Caco-2 (cell line): ENCODE measurements at regions of chr19 and their contacts with region 1.

Region 1: GRCh38 chr19:3984908-3985642 is at the start of gene EEF2:
- DNase-seq: peak; percentile 83 to 91
- H3K4me3 ChIP-seq: peak within 1 kb of the TSS; percentile 98
- H3K4me3 Mint-ChIP-seq: peak within 1 kb of the TSS; percentile 89
- H3K27ac Mint-ChIP-seq: peak within 1 kb of the TSS; percentile 96
- H3K4me1 ChIP-seq: peaks cover 12% of the 10 kb centered on the region
- H3K4me1 Mint-ChIP-seq: peaks cover 6% of the 10 kb centered on the region
- H3K27me3 ChIP-seq: no peaks in the 10 kb centered on the region
- H3K27me3 Mint-ChIP-seq: no peaks in the 10 kb centered on the region
- CTCF ChIP-seq: no peak
- total RNA-seq, gene EEF2: 2,154 and 2,157 TPM in 2 replicates

Region 2: GRCh38 chr19:2811221-2811722 is 1173.8 kb before region 1 on chr19:
- CTCF ChIA-PET with region 1: no interaction called
- POLR2A ChIA-PET with region 1: interaction called, 13 read pairs
- intact Hi-C with region 1: no loop called
- DNase-seq: peak; percentile 43 to 52
- H3K4me3 ChIP-seq: no peak overlapping the region
- H3K4me3 Mint-ChIP-seq: no peak overlapping the region
- H3K27ac Mint-ChIP-seq: no peak overlapping the region
- H3K4me1 ChIP-seq: peaks cover 28% of the 10 kb centered on the region
- H3K4me1 Mint-ChIP-seq: no peaks in the 10 kb centered on the region
- H3K27me3 ChIP-seq: no peaks in the 10 kb centered on the region
- H3K27me3 Mint-ChIP-seq: no peaks in the 10 kb centered on the region
- CTCF ChIP-seq: no peak

Region 3: GRCh38 chr19:3566125-3566524 is 418.9 kb before region 1 on chr19:
- CTCF ChIA-PET with region 1: no interaction called
- POLR2A ChIA-PET with region 1: interaction called, 10 read pairs
- intact Hi-C with region 1: no loop called
- DNase-seq: no peak
- H3K4me3 ChIP-seq: no peak overlapping the region
- H3K4me3 Mint-ChIP-seq: no peak overlapping the region
- H3K27ac Mint-ChIP-seq: no peak overlapping the region
- H3K4me1 ChIP-seq: no peaks in the 10 kb centered on the region
- H3K4me1 Mint-ChIP-seq: no peaks in the 10 kb centered on the region
- H3K27me3 ChIP-seq: no peaks in the 10 kb centered on the region
- H3K27me3 Mint-ChIP-seq: no peaks in the 10 kb centered on the region
- CTCF ChIP-seq: no peak

Region 4: GRCh38 chr19:3642987-3643673 is 341.9 kb before region 1 on chr19:
- CTCF ChIA-PET with region 1: no interaction called
- POLR2A ChIA-PET with region 1: no interaction called
- intact Hi-C with region 1: no loop called
- DNase-seq: peak; percentile 48 to 49
- H3K4me3 ChIP-seq: no peak overlapping the region
- H3K4me3 Mint-ChIP-seq: no peak overlapping the region
- H3K27ac Mint-ChIP-seq: no peak overlapping the region
- H3K4me1 ChIP-seq: no peaks in the 10 kb centered on the region
- H3K4me1 Mint-ChIP-seq: no peaks in the 10 kb centered on the region
- H3K27me3 ChIP-seq: no peaks in the 10 kb centered on the region
- H3K27me3 Mint-ChIP-seq: no peaks in the 10 kb centered on the region
- CTCF ChIP-seq: no peak

Region 5: DNA sequence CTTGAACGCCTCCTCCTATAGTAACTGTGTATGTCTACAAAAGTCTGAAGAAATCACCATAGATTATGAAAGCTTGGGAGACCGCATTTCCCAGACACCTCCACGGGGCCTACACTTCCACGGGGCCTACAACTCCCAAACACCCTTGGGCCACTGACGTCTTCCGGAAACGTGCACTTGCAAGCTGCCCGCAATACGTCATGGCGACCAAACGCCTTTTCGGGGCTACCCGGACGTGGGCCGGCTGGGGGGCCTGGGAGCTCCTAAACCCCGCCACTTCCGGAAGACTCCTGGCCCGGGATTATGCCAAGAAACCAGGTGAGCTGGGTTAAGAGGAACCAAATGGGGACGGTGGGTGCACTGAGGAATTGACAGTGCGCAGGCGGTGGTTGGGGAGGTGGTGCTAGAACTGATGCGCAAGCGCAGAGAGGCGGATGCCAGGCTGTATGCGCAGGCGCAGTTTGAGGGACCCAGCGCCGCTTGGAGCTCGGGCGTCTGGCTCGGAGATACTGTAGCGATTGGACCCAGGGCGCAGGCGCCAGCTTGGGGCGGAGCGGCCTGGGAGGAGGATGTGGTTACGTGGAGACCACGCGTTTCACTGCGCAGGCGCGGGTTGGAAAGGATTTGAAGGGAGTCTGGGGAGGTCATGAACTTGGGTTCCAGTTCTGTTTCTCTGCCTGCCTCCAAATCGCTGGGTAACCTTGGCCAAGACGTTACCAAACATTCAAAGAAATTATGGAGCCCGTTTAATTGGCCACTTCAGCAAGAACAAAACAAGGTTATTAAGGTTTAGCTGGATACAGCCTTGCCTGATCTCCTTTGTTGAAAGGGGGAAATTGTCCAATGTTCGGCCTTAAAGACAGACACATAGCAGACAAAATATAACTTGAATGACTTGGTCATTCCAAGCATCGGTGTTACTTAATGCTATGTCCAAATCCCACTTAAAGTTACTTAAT is 222.3 kb before region 1 on chr19 and contains the start of gene MRPL54:
- CTCF ChIA-PET with region 1: interaction called, 5 read pairs
- POLR2A ChIA-PET with region 1: interaction called, 10 read pairs
- intact Hi-C with region 1: no loop called
- DNase-seq: peak; percentile 98
- H3K4me3 ChIP-seq: peak within 1 kb of the TSS; percentile 68
- H3K4me3 Mint-ChIP-seq: peak within 1 kb of the TSS; percentile 96
- H3K27ac Mint-ChIP-seq: peak within 1 kb of the TSS; percentile 99
- H3K4me1 ChIP-seq: peaks cover 4% of the 10 kb centered on the region
- H3K4me1 Mint-ChIP-seq: peaks cover 8% of the 10 kb centered on the region
- H3K27me3 ChIP-seq: no peaks in the 10 kb centered on the region
- H3K27me3 Mint-ChIP-seq: no peaks in the 10 kb centered on the region
- CTCF ChIP-seq: no peak
- total RNA-seq, gene MRPL54: 46.4 and 54.5 TPM in 2 replicates

Region 6: DNA sequence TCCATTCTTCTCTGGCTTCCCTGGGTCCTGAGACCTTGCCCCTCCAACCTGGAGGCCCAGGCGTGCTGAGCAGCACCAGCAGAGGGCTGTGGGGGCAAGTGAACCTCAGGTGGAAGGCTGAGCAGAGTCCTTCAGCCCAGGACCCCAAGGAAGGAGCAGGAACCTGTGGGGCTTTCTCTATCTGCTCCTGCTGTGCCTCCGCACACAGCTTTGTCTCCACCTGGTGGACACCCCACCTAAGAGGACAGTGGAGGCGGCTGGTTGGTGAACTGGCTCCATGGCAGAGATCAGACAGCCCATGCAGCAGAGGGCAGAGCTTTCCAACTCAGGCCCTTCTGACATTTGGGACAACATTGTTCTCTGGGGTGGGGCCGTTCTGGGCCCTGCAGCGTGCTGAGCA is 136.0 kb before region 1 on chr19:
- CTCF ChIA-PET with region 1: no interaction called
- POLR2A ChIA-PET with region 1: no interaction called
- intact Hi-C with region 1: no loop called
- DNase-seq: peak; percentile 46
- H3K4me3 ChIP-seq: no peak overlapping the region
- H3K4me3 Mint-ChIP-seq: no peak overlapping the region
- H3K27ac Mint-ChIP-seq: no peak overlapping the region
- H3K4me1 ChIP-seq: no peaks in the 10 kb centered on the region
- H3K4me1 Mint-ChIP-seq: no peaks in the 10 kb centered on the region
- H3K27me3 ChIP-seq: no peaks in the 10 kb centered on the region
- H3K27me3 Mint-ChIP-seq: no peaks in the 10 kb centered on the region
- CTCF ChIP-seq: peak; percentile 20 to 48

Region 7: DNA sequence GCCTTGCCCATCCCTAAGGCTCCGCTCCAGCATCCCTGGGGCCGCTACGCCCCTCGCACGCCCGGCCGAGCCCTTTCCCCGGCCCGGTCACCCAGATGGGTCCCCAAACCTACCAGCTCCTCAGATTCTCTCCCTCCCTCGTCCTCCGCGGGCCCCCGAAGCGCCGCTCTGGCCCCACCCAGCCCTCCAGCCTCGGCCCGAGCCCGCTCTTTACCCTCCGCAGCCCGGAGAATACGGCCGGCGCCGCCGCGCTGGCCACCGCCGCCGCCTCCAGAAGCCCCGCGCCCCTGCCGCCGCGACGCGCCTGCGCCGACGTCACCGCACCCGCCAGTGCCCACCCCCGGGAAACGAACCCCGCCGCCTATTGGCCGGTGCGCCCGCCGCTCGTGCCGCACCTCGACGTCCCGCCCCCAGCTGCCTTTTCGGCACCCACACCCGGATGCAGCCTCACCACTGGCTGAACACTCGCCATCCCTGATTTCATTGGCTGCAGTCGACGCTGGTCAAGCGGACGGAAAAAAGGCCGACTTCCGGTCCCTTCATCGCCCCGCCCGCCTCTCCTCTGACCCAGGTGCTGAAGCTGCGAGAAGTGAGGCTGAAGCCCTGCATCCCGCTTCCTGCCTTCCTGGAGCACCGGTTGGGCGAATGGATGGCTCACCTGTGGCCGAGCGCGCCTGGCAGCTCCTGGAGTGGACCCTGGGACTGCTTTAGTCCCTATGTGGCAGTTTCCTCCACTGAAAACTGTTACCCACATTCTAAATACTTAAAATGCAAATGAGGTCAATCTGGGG is 14.1 kb before region 1 on chr19 and contains the start of gene DAPK3:
- CTCF ChIA-PET with region 1: interaction called, 21 read pairs
- POLR2A ChIA-PET with region 1: interaction called, 67 read pairs
- intact Hi-C with region 1: no loop called
- DNase-seq: peak; percentile 98
- H3K4me3 ChIP-seq: peak within 1 kb of the TSS; percentile 97
- H3K4me3 Mint-ChIP-seq: peak within 1 kb of the TSS; percentile 78
- H3K27ac Mint-ChIP-seq: peak within 1 kb of the TSS; percentile 79
- H3K4me1 ChIP-seq: peaks cover 28% of the 10 kb centered on the region
- H3K4me1 Mint-ChIP-seq: peaks cover 22% of the 10 kb centered on the region
- H3K27me3 ChIP-seq: no peaks in the 10 kb centered on the region
- H3K27me3 Mint-ChIP-seq: no peaks in the 10 kb centered on the region
- CTCF ChIP-seq: no peak
- total RNA-seq, gene DAPK3: 58.6 and 66.4 TPM in 2 replicates

Region 8: GRCh38 chr19:4007021-4007835 is 22.2 kb after region 1 on chr19 and contains the start of gene PIAS4:
- CTCF ChIA-PET with region 1: interaction called, 11 read pairs
- POLR2A ChIA-PET with region 1: interaction called, 7 read pairs
- intact Hi-C with region 1: no loop called
- DNase-seq: peak; percentile 94 to 96
- H3K4me3 ChIP-seq: peak within 1 kb of the TSS; percentile 92
- H3K4me3 Mint-ChIP-seq: peak within 1 kb of the TSS; percentile 86
- H3K27ac Mint-ChIP-seq: peak within 1 kb of the TSS; percentile 78
- H3K4me1 ChIP-seq: peaks cover 4% of the 10 kb centered on the region; the same call in 1 of the 2 replicates
- H3K4me1 Mint-ChIP-seq: peaks cover 5% of the 10 kb centered on the region
- H3K27me3 ChIP-seq: no peaks in the 10 kb centered on the region
- H3K27me3 Mint-ChIP-seq: no peaks in the 10 kb centered on the region
- CTCF ChIP-seq: no peak
- total RNA-seq, gene PIAS4: 43.3 and 45.7 TPM in 2 replicates

Region 9: GRCh38 chr19:4065430-4066175 is 80.5 kb after region 1 on chr19:
- CTCF ChIA-PET with region 1: interaction called, 5 read pairs
- POLR2A ChIA-PET with region 1: no interaction called
- intact Hi-C with region 1: loop called (anchors 10 kb)
- DNase-seq: peak; percentile 96 to 97
- H3K4me3 ChIP-seq: peak overlapping the region; percentile 91
- H3K4me3 Mint-ChIP-seq: peak overlapping the region; percentile 76
- H3K27ac Mint-ChIP-seq: no peak overlapping the region
- H3K4me1 ChIP-seq: peaks cover 36% of the 10 kb centered on the region
- H3K4me1 Mint-ChIP-seq: no peaks in the 10 kb centered on the region
- H3K27me3 ChIP-seq: no peaks in the 10 kb centered on the region
- H3K27me3 Mint-ChIP-seq: no peaks in the 10 kb centered on the region
- CTCF ChIP-seq: no peak